HCT116 (cell line): ENCODE measurements at regions of chr6 and their contacts with region 1.

Region 1: GRCh38 chr6:164859816-164860215 is 449.6 kb downstream of the C6orf118 start:
- DNase-seq: no peak
- ATAC-seq: no peak
- H3K4me3 ChIP-seq: no peak overlapping the region
- H3K27ac ChIP-seq: no peak overlapping the region
- H3K4me1 ChIP-seq: no peaks in the 10 kb centered on the region
- H3K27me3 ChIP-seq: no peaks in the 10 kb centered on the region
- CTCF ChIP-seq: no peak
- POLR2A ChIP-seq: no peak
- RAD21 ChIP-seq: no peak

Region 2: DNA sequence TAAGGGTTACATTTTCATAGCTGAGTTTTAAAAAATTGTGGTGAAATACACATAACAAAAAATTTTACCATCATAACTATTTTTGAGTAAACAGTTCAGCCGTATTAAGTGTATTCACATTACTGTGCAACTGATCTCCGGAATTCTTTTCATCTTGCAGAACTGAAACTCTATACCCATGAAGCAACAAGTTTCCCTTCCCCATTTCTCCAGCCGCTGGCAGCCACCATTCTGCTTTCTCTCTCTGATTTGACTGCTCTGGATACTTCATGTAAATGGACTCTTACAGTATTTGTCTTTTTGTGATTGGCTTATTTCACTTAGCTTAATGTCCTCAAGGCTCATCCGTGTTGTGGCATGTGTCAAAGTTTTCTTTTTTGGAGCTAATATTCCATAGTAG is 1103.7 kb before region 1 on chr6:
- CTCF ChIA-PET with region 1: no interaction called
- POLR2A ChIA-PET with region 1: no interaction called
- RAD21 ChIA-PET with region 1: no interaction called
- intact Hi-C with region 1: no loop called
- DNase-seq: no peak
- ATAC-seq: no peak
- H3K4me3 ChIP-seq: no peak overlapping the region
- H3K27ac ChIP-seq: no peak overlapping the region
- H3K4me1 ChIP-seq: no peaks in the 10 kb centered on the region
- H3K27me3 ChIP-seq: no peaks in the 10 kb centered on the region
- CTCF ChIP-seq: no peak
- POLR2A ChIP-seq: no peak
- RAD21 ChIP-seq: no peak

Region 3: GRCh38 chr6:164477101-164477500 is 382.7 kb before region 1 on chr6:
- CTCF ChIA-PET with region 1: no interaction called
- POLR2A ChIA-PET with region 1: no interaction called
- RAD21 ChIA-PET with region 1: no interaction called
- intact Hi-C with region 1: no loop called
- DNase-seq: no peak
- ATAC-seq: no peak
- H3K4me3 ChIP-seq: no peak overlapping the region
- H3K27ac ChIP-seq: no peak overlapping the region
- H3K4me1 ChIP-seq: no peaks in the 10 kb centered on the region
- H3K27me3 ChIP-seq: no peaks in the 10 kb centered on the region
- CTCF ChIP-seq: no peak
- POLR2A ChIP-seq: no peak
- RAD21 ChIP-seq: no peak

Region 4: DNA sequence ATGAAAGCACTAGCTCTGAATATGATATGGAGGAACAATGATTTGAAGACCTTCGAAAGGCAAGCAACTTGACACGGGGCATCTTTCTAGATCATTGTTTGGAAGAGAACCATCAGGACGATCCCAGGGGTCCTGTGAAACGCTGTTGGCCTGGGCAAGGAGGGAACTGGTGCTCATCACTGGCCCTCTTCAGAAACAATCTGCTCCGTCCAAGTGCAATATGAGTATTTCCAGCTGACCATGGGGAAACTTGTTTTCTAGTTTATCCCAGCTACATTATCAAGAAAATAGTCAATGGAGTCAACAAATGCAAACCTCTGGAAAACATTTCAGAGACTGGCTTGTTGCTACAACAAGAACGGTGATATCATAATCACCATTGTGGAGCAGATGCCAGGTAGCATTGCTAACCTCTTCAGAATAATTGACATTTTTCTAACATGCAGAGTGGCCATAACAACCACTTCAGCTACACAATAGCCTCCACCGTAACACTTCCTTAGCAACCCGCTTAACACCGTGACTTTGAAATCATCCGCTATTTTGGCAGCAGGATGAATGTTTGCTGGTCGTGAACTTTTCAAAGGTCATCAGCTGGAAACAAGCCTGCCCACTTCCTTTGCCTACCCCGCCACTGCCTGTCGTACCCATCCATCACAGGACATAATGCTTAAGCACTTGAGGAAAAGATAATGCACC is 915.2 kb after region 1 on chr6:
- CTCF ChIA-PET with region 1: no interaction called
- POLR2A ChIA-PET with region 1: no interaction called
- RAD21 ChIA-PET with region 1: no interaction called
- intact Hi-C with region 1: loop called (anchors 10 kb)
- DNase-seq: no peak
- ATAC-seq: no peak
- H3K4me3 ChIP-seq: no peak overlapping the region
- H3K27ac ChIP-seq: no peak overlapping the region
- H3K4me1 ChIP-seq: no peaks in the 10 kb centered on the region
- H3K27me3 ChIP-seq: no peaks in the 10 kb centered on the region
- CTCF ChIP-seq: no peak
- POLR2A ChIP-seq: no peak
- RAD21 ChIP-seq: no peak